ENCODE measurements at regions of chr3 and their contacts with region 1.

Region 1: GRCh38 chr3:152281133-152281713 is 12.5 kb downstream of the MBNL1 start:
- DNase-seq: no peak
- ATAC-seq: peak; percentile 3
- H3K4me3 ChIP-seq: no peak overlapping the region
- H3K27ac ChIP-seq: peak overlapping the region; percentile 30; the same call in 1 of the 3 replicates
- H3K4me1 ChIP-seq: peaks cover 3 to 48% of the 10 kb centered on the region in 2 experiments; a peak in 4 of 5 replicates
- H3K27me3 ChIP-seq: no peaks in the 10 kb centered on the region
- CTCF ChIP-seq: no peak
- EP300 ChIP-seq: no peak
- POLR2A ChIP-seq: no peak
- RAD21 ChIP-seq: no peak

Region 2: DNA sequence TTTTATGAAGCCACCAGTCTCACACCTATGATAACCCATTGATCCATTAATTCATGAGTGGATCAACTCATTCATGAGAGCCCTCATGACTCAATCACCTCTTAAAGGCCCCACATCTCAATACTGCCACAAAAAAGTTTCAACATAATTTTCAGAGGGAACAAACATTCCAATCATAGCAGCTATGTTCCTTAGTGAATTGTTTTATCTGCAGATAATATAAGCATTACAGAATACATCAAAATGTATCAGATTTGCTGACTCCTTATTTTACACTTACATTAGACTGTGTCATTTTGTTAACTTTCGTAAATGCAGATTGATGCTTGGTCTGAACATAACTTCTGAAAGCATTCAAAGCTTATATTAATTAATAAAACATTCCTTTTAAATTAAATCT is 167.8 kb before region 1 on chr3:
- CTCF ChIA-PET with region 1: no interaction called
- POLR2A ChIA-PET with region 1: no interaction called
- in situ Hi-C with region 1: no loop called
- intact Hi-C with region 1: no loop called
- DNase-seq: no peak
- ATAC-seq: no peak
- H3K4me3 ChIP-seq: no peak overlapping the region
- H3K27ac ChIP-seq: no peak overlapping the region
- H3K4me1 ChIP-seq: peaks cover 0 to 3% of the 10 kb centered on the region in 2 experiments; a peak in 1 of 5 replicates
- H3K27me3 ChIP-seq: no peaks in the 10 kb centered on the region
- CTCF ChIP-seq: no peak
- EP300 ChIP-seq: no peak
- POLR2A ChIP-seq: no peak
- RAD21 ChIP-seq: no peak

Region 3: GRCh38 chr3:152254041-152254440 is 27.2 kb before region 1 on chr3:
- CTCF ChIA-PET with region 1: no interaction called
- POLR2A ChIA-PET with region 1: no interaction called
- in situ Hi-C with region 1: no loop called
- intact Hi-C with region 1: no loop called
- DNase-seq: no peak
- ATAC-seq: no peak
- H3K4me3 ChIP-seq: no peak overlapping the region
- H3K27ac ChIP-seq: no peak overlapping the region
- H3K4me1 ChIP-seq: peaks cover 5 to 19% of the 10 kb centered on the region in 2 experiments
- H3K27me3 ChIP-seq: no peaks in the 10 kb centered on the region
- CTCF ChIP-seq: no peak
- EP300 ChIP-seq: no peak
- POLR2A ChIP-seq: no peak
- RAD21 ChIP-seq: no peak

Region 4: DNA sequence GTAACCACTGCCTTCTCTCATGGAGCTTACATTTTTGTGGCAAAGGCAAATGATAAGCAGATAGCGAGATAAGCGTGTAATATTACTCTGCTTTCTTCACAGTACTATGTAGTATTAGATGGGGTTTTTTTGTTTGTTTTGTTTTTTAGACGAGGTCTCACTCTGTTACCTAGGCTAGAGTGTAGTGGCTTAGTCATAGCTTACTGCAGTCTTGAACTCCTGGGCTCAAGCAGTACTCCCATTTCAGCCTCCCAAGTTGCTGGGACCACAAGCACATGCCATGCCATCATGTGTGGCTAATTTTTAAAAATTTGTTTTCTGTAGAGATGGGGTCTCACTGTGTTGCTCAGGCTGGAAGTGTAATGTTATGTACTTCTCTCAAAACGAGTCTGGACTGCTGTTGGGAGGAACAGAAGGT is 10.4 kb after region 1 on chr3:
- CTCF ChIA-PET with region 1: no interaction called
- POLR2A ChIA-PET with region 1: interaction called, 24 read pairs
- in situ Hi-C with region 1: no loop called
- intact Hi-C with region 1: no loop called
- DNase-seq: no peak
- ATAC-seq: peak; percentile 47
- H3K4me3 ChIP-seq: no peak overlapping the region
- H3K27ac ChIP-seq: no peak overlapping the region
- H3K4me1 ChIP-seq: peaks cover 19 to 40% of the 10 kb centered on the region in 2 experiments
- H3K27me3 ChIP-seq: no peaks in the 10 kb centered on the region
- CTCF ChIP-seq: no peak
- EP300 ChIP-seq: no peak
- POLR2A ChIP-seq: no peak
- RAD21 ChIP-seq: no peak

Region 5: DNA sequence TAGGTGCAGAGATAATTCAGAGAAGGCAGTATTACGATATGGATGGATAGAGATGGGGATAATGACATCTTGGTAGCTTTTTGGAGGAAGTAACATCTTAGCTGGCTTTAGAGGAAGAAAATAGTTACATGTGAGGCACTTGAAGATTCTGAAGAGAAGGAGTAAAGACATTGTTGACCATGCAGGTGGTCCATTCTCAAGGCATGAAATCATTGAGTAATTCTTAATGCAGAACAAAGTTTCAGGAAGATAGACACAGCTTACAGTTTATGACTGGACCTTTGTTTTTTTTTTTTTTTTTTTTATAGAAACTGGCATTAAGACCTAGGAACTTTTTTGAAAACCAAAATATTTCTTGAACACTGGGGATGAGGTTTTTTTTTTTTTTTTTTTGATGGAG is 15.7 kb after region 1 on chr3:
- CTCF ChIA-PET with region 1: no interaction called
- POLR2A ChIA-PET with region 1: interaction called, 24 read pairs
- in situ Hi-C with region 1: no loop called
- intact Hi-C with region 1: no loop called
- DNase-seq: no peak
- ATAC-seq: no peak
- H3K4me3 ChIP-seq: no peak overlapping the region
- H3K27ac ChIP-seq: no peak overlapping the region
- H3K4me1 ChIP-seq: peaks cover 19 to 61% of the 10 kb centered on the region in 2 experiments
- H3K27me3 ChIP-seq: no peaks in the 10 kb centered on the region
- CTCF ChIP-seq: no peak
- EP300 ChIP-seq: no peak
- POLR2A ChIP-seq: no peak
- RAD21 ChIP-seq: no peak

Region 6: DNA sequence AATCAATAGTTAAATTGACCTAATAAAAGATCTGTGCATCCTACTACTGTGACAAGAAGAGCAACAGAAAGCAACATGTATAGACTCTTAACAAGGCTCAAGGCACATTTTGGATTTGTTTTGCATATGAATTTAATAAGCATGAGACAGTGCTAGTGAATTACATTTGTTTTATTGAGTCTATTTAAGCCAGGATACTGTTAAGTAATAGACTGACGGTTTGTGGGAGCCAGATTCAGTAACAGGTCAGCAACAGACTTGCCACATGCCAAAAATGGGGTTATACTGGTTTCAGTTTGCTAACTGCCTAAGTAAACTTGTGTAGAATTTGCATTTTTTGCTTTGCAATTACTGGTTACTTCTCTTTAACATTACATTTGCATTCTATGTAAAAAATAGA is 41.5 kb after region 1 on chr3:
- CTCF ChIA-PET with region 1: no interaction called
- POLR2A ChIA-PET with region 1: no interaction called
- in situ Hi-C with region 1: no loop called
- intact Hi-C with region 1: no loop called
- DNase-seq: no peak
- ATAC-seq: no peak
- H3K4me3 ChIP-seq: no peak overlapping the region
- H3K27ac ChIP-seq: peak overlapping the region; percentile 20; the same call in 1 of the 3 replicates
- H3K4me1 ChIP-seq: peaks cover 12 to 47% of the 10 kb centered on the region in 2 experiments
- H3K27me3 ChIP-seq: no peaks in the 10 kb centered on the region
- CTCF ChIP-seq: no peak
- EP300 ChIP-seq: no peak
- POLR2A ChIP-seq: no peak
- RAD21 ChIP-seq: no peak

Measured in K562 (cell line).